Dorsolateral prefrontal cortex (tissue), 120 donors: ENCODE measurements at regions of chr2 and their contacts with region 1.

Region 1: DNA sequence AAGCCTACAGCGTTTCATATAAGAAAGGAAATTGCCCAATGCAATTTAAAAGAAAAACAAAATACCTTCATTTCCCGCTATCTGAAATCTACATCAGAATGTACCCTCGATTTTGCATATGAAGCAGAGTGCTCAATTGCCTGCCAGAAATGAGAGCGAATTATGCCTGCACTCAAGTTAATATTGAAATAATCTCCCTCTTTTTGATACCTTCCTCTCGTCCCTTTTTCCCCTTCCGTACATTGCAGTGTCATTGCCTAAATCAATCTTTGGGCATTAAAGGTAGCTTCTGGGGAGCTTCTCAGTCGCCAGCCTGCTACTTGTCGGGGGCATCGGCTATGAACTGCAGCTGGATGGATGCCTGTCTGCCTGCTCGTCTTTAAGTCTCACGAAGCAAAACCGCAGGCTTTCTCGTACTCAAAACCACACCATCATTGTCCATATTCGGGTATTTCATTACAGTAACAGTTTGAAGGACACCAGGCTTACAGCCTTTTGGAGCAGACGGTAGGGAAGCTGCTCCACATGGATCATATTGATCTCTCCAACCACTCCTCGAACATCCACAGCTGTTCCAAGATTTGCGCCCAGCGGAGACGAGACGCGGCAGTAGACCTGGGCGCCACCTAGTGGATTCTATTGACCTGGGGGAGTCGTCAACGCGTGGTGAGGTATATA is 64.0 kb upstream of the HNRNPA3 start:
- DNase-seq: peak in 9 of 10 donors; percentile 49 to 78 (median 69)
- H3K4me3 ChIP-seq: peak overlapping the region; percentile 27 to 73 (median 54)
- H3K27ac ChIP-seq: peak overlapping the region in 2 of 59 donors; percentile 14 to 46
- H3K27me3 ChIP-seq: peaks cover 0 to 47% (median 12%) of the 10 kb centered on the region in 45 donors
- CTCF ChIP-seq: peak; percentile 46 to 88 (median 74)

Region 2: GRCh38 chr2:176126929-176127773 is 1021.5 kb before region 1 on chr2:
- intact Hi-C with region 1: loop called in 1 of 2 experiments (anchors 5 kb)
- DNase-seq: peak in 9 of 10 donors; percentile 47 to 74 (median 63)
- H3K4me3 ChIP-seq: no peak overlapping the region
- H3K27ac ChIP-seq: no peak overlapping the region
- H3K27me3 ChIP-seq: peaks cover 22 to 100% (median 95%) of the 10 kb centered on the region in 45 donors
- CTCF ChIP-seq: peak; percentile 73 to 98 (median 90)

Region 3: DNA sequence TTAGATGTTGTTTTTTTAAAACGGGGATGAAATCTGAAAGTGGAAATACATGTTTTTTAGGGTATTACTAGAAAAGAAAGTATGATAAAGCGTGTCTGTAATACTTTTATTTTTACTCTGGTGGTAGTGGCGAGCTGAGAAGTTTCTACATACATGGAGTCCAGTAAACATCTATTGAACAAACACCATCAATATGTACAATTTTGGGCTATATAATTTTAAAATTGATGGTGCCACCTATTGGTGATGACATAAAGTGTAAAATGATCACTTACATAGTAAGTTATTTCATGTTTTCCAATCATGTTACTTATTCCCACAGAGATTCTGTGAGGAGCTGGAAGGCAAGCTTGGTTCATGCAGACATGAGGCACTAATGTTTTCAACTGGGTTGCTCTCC is 147.4 kb after region 1 on chr2:
- intact Hi-C with region 1: no loop called
- DNase-seq: no peak
- H3K4me3 ChIP-seq: peak overlapping the region in 20 of 59 donors; percentile 1 to 46 (median 24)
- H3K27ac ChIP-seq: peak overlapping the region in 36 of 59 donors; percentile 0 to 75 (median 50)
- H3K27me3 ChIP-seq: no peaks in the 10 kb centered on the region
- CTCF ChIP-seq: peak in 53 of 56 donors; percentile 19 to 76 (median 52)

Region 4: DNA sequence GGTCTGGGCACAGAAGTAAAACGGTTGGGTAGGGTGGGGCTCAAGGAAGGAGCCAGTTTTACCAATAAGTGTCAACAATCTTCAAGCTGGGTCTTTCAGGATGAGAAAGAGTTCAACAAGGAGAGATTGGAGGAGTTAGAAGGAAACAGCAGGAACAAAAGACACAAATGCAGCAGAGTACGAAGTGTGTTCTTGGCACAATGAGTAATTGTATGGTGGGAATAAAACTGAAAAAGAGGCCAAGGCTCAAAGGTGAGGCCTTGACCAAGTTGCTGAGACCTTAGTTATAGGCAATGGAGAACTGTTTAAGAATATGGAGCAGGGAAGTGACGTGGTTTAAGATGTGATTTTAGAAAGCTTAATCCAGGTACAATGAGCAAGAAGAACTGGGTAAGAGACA is 693.6 kb after region 1 on chr2:
- intact Hi-C with region 1: no loop called
- DNase-seq: no peak
- H3K4me3 ChIP-seq: no peak overlapping the region
- H3K27ac ChIP-seq: no peak overlapping the region
- H3K27me3 ChIP-seq: peaks cover 0 to 5% (median 0%) of the 10 kb centered on the region in 45 donors
- CTCF ChIP-seq: no peak